Right cardiac atrium (tissue), 5 donors: ENCODE measurements at regions of chr1 and their contacts with region 1.

Region 1: DNA sequence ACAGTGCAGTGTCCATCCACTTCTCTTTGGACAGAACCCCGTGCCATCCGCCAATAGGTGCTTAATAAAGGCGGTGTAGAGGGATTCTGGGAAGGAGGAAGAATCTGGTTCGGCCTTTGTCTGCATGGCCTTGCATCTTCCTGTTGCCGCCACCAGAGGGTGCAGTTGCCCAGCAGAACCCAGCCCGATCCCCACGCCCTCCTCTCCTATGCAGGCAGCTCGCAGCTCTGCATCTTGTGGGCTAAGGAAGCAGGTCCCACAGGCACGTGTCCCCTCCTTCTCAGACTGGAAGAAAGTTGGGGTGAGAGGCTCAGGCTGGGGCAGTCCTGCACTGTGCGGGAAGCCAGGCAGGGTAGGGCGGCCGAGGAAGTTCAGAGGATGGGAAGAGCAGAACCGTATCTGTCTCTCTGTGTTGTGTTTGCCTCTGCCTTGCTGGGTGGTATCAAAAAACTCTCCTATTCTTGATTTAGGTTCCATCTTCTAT is 20.8 kb downstream of the NAV1 start:
- DNase-seq: peak; percentile 81 to 91 (median 90)
- ATAC-seq: peak; percentile 85 to 86
- H3K4me3 ChIP-seq: no peak overlapping the region
- H3K27ac ChIP-seq: no peak overlapping the region
- H3K4me1 ChIP-seq: peaks cover 4% of the 10 kb centered on the region
- H3K27me3 ChIP-seq: no peaks in the 10 kb centered on the region

Region 2: GRCh38 chr1:201637680-201638079 is 78.0 kb after region 1 on chr1:
- intact Hi-C with region 1: loop called in 1 of 4 experiments (anchors 10 kb)
- DNase-seq: peak in 1 of 3 donors; percentile 33
- ATAC-seq: peak in 1 of 2 donors; percentile 35
- H3K4me3 ChIP-seq: no peak overlapping the region
- H3K27ac ChIP-seq: peak overlapping the region; percentile 42
- H3K4me1 ChIP-seq: peaks cover 20% of the 10 kb centered on the region
- H3K27me3 ChIP-seq: no peaks in the 10 kb centered on the region

Region 3: GRCh38 chr1:201703621-201704439 is 144.1 kb after region 1 on chr1:
- intact Hi-C with region 1: loop called (anchors 1 to 5 kb)
- DNase-seq: peak; percentile 89 to 94 (median 94)
- ATAC-seq: peak; percentile 91 to 92
- H3K4me3 ChIP-seq: no peak overlapping the region
- H3K27ac ChIP-seq: peak overlapping the region; percentile 68
- H3K4me1 ChIP-seq: peaks cover 5% of the 10 kb centered on the region
- H3K27me3 ChIP-seq: no peaks in the 10 kb centered on the region

Region 4: DNA sequence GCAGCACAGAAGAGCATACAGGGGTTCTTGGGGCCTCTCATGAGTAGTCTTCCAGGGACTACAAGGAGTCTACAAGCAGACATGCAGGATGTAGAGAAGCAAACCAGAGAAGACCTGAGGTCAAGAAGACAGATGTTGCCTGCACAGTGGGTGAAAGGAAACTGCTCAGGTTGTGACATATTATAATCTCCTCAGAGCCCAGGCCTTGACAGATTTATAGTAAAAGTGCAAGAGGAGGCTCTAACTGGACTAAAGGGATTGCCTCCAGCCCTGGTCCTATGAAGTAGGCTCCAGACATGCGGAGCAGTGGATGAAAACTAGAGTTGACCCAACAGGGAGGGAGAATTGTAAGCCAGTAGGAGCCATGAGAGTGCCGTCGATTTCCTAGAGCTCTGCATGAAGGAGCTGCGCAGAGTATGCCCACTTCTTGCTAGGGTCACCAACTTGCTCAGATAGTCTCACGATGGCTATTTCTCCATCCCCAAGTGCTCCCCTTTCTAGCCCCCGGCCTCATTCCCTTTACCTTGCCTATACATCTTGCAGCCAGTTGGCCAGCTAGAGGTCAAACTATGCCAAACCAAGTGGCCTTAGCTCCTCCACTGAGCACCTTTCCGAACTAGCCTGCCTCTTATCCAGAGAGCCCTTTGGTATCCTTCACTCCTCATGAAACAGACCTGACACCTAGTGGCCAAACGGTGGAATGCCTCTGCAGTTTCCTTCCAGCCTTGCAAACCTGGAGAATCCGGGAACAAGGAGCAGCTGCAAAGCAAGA is 233.0 kb after region 1 on chr1:
- intact Hi-C with region 1: loop called (anchors 2 to 5 kb)
- DNase-seq: peak; percentile 68 to 84 (median 81)
- ATAC-seq: peak; percentile 82 to 86
- H3K4me3 ChIP-seq: no peak overlapping the region
- H3K27ac ChIP-seq: peak overlapping the region; percentile 87
- H3K4me1 ChIP-seq: peaks cover 19% of the 10 kb centered on the region
- H3K27me3 ChIP-seq: no peaks in the 10 kb centered on the region